Panc1 (cell line): ENCODE measurements at regions of chrX and their contacts with region 1.

Region 1: GRCh38 chrX:73447311-73447794 is 500 bp downstream of the CDX4 start:
- DNase-seq: no peak
- ATAC-seq: no peak
- H3K4me3 ChIP-seq: no peak overlapping the region
- H3K27ac ChIP-seq: no peak overlapping the region
- H3K4me1 ChIP-seq: no peaks in the 10 kb centered on the region
- H3K27me3 ChIP-seq: no peaks in the 10 kb centered on the region; the same call in 1 of the 2 replicates
- CTCF ChIP-seq: no peak

Region 2: GRCh38 chrX:74009041-74009440 is 561.7 kb after region 1 on chrX:
- CTCF ChIA-PET with region 1: interaction called, 12 read pairs
- POLR2A ChIA-PET with region 1: no interaction called
- in situ Hi-C with region 1: no loop called
- intact Hi-C with region 1: no loop called
- DNase-seq: no peak
- ATAC-seq: no peak
- H3K4me3 ChIP-seq: no peak overlapping the region
- H3K27ac ChIP-seq: no peak overlapping the region
- H3K4me1 ChIP-seq: no peaks in the 10 kb centered on the region
- H3K27me3 ChIP-seq: no peaks in the 10 kb centered on the region
- CTCF ChIP-seq: no peak